ENCODE measurements at regions of chr6 and their contacts with region 1.

Region 1: GRCh38 chr6:3929281-3929798 is 80.2 kb downstream of the FAM50B start:
- DNase-seq: no peak
- H3K4me3 ChIP-seq: no peak overlapping the region
- H3K27ac ChIP-seq: peak overlapping the region; percentile 39 to 52
- H3K4me1 ChIP-seq: peaks cover 0 to 9% of the 10 kb centered on the region in 2 donors
- H3K27me3 ChIP-seq: no peaks in the 10 kb centered on the region
- CTCF ChIP-seq: no peak

Region 2: GRCh38 chr6:3894590-3895311 is 34.6 kb before region 1 on chr6:
- intact Hi-C with region 1: loop called (anchors 5 kb)
- DNase-seq: no peak
- H3K4me3 ChIP-seq: no peak overlapping the region
- H3K27ac ChIP-seq: no peak overlapping the region
- H3K4me1 ChIP-seq: peaks cover 0 to 14% of the 10 kb centered on the region in 2 donors
- H3K27me3 ChIP-seq: no peaks in the 10 kb centered on the region
- CTCF ChIP-seq: no peak

Region 3: DNA sequence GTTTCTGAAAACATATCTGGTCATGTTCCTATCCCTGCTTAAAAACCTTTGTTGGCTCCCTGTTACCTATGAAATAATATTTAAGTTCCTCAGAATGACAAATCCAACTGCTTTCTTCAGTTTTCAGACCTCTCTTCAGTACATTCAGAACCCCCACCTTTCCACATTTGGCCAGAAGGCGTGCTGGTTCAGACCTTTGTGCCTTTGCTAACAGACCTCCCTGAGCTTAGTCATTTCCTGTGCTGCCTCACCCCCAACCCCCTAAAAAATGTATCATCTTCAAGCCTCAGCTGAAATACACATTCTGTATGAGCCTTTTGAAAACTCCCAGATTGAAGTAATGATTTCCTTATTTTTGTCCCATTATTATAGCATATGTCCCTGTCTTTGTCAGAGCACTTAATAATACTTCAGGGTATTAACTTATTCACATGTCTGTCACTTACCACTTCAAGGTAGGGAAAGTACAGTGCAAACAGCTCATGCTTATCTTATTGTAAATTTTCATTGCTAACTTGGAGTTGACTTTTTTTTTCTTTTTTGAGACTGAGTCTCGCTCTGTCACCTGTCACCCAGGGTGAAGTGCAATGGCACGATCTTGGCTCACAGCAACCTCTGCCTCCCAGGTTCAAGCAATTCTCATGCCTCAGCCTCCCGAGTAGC is 129.9 kb after region 1 on chr6:
- intact Hi-C with region 1: no loop called
- DNase-seq: no peak
- H3K4me3 ChIP-seq: no peak overlapping the region
- H3K27ac ChIP-seq: no peak overlapping the region
- H3K4me1 ChIP-seq: no peaks in the 10 kb centered on the region
- H3K27me3 ChIP-seq: no peaks in the 10 kb centered on the region
- CTCF ChIP-seq: no peak

Region 4: GRCh38 chr6:4102687-4103244 is 173.4 kb after region 1 on chr6:
- intact Hi-C with region 1: no loop called
- DNase-seq: no peak
- H3K4me3 ChIP-seq: no peak overlapping the region
- H3K27ac ChIP-seq: no peak overlapping the region
- H3K4me1 ChIP-seq: no peaks in the 10 kb centered on the region
- H3K27me3 ChIP-seq: no peaks in the 10 kb centered on the region
- CTCF ChIP-seq: no peak